ENCODE measurements at regions of chr10 and their contacts with region 1.

Region 1: GRCh38 chr10:119750391-119751230 is 24.8 kb downstream of the INPP5F start:
- DNase-seq: peak; percentile 36
- ATAC-seq: peak; percentile 95
- H3K4me3 ChIP-seq: no peak overlapping the region
- H3K27ac ChIP-seq: no peak overlapping the region
- H3K4me1 ChIP-seq: no peaks in the 10 kb centered on the region
- H3K27me3 ChIP-seq: no peaks in the 10 kb centered on the region
- CTCF ChIP-seq: peak; percentile 93
- EP300 ChIP-seq: no peak; a peak in 1 of 4 replicates
- POLR2A ChIP-seq: no peak
- RAD21 ChIP-seq: peak; percentile 99

Region 2: GRCh38 chr10:119715628-119716505 is 34.7 kb before region 1 on chr10:
- CTCF ChIA-PET with region 1: interaction called, 10 read pairs
- POLR2A ChIA-PET with region 1: no interaction called
- RAD21 ChIA-PET with region 1: interaction called, 4 read pairs
- SMC1A ChIA-PET with region 1: interaction called, 3 read pairs
- in situ Hi-C with region 1: no loop called
- intact Hi-C with region 1: no loop called
- DNase-seq: no peak
- ATAC-seq: no peak
- H3K4me3 ChIP-seq: no peak overlapping the region
- H3K27ac ChIP-seq: no peak overlapping the region
- H3K4me1 ChIP-seq: no peaks in the 10 kb centered on the region
- H3K27me3 ChIP-seq: no peaks in the 10 kb centered on the region
- CTCF ChIP-seq: no peak
- EP300 ChIP-seq: no peak
- POLR2A ChIP-seq: no peak
- RAD21 ChIP-seq: no peak

Region 3: DNA sequence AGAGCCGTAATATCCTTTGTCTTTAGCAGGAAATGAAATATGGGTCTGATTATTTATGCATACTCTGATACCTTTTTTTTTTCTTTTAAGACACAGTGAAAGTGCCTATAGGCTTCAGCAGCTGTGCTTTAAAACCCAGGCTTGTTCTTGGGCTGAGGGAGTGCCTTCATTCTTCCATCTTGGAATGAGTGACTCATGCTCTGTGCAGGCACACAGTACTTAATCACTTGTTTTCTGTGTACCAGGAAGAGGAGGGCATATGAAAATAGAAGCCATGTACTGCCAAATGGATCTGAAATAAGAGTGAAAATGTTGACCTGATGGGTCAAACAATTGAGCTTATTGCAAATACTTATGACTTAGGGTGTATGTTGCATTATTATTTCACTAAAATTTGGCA is 12.8 kb before region 1 on chr10:
- CTCF ChIA-PET with region 1: interaction called, 47 read pairs
- POLR2A ChIA-PET with region 1: interaction called, 3 read pairs
- RAD21 ChIA-PET with region 1: interaction called, 10 read pairs
- SMC1A ChIA-PET with region 1: interaction called, 23 read pairs
- in situ Hi-C with region 1: no loop called
- intact Hi-C with region 1: no loop called
- DNase-seq: no peak
- ATAC-seq: peak; percentile 39
- H3K4me3 ChIP-seq: no peak overlapping the region
- H3K27ac ChIP-seq: no peak overlapping the region
- H3K4me1 ChIP-seq: no peaks in the 10 kb centered on the region
- H3K27me3 ChIP-seq: no peaks in the 10 kb centered on the region
- CTCF ChIP-seq: no peak
- EP300 ChIP-seq: no peak
- POLR2A ChIP-seq: no peak
- RAD21 ChIP-seq: no peak

Region 4: DNA sequence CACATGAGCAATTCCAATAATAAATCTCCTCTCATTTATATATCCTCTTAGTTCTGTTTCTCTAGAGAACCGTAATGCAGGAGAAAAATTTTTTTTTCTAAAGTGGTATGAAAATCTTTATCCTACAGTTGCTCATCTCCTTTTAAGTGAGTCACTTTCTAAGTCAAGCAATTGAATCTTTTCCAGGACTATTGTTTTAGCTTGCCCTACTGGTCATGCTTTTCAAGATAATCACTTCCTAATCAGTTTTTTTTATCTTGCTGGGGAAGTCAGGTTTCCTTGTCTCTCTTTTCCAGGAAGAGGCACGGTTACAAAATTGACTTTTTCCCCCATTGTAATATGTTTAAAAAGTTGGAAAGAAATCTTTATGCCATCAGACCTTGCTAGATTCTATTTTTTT is 19.3 kb after region 1 on chr10:
- CTCF ChIA-PET with region 1: interaction called, 18 read pairs
- POLR2A ChIA-PET with region 1: interaction called, 4 read pairs
- RAD21 ChIA-PET with region 1: interaction called, 4 read pairs
- SMC1A ChIA-PET with region 1: interaction called, 27 read pairs
- in situ Hi-C with region 1: no loop called
- intact Hi-C with region 1: no loop called
- DNase-seq: no peak
- ATAC-seq: no peak
- H3K4me3 ChIP-seq: no peak overlapping the region
- H3K27ac ChIP-seq: no peak overlapping the region
- H3K4me1 ChIP-seq: no peaks in the 10 kb centered on the region
- H3K27me3 ChIP-seq: no peaks in the 10 kb centered on the region
- CTCF ChIP-seq: no peak
- EP300 ChIP-seq: no peak
- POLR2A ChIP-seq: no peak
- RAD21 ChIP-seq: no peak

Region 5: DNA sequence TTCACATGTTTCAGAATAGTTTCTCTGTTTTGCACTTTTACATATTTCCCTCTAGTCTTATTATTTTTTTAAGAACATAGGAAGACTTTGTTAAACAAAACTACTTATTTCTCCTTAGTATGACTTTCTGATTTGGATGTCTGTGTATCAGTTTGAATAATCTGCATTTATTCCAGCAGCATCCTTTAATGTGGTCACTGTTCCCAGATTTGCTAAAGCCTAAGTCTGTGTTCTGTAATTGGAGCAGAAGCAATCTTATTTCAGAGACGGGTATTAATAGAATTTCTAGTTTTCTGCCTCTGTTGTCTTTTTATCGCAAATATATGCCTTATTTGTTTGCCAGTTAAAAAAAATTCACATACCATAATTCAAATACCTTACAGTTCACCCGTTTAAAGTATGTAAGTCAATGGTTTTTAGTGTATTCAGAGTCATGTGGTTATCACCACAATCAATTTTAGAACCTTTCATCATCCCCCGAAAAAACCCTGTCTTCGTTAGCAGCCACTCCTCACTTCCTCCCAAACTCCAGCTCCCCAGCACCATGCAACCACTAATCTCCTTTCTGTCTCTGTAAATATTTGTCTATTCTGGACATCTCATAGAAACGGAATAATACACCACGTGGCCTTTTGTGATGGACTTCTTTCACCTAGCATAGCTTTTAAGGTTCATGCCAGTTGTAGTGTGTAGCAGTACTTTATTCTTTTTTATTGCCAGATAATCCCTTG is 33.9 kb after region 1 on chr10:
- CTCF ChIA-PET with region 1: interaction called, 20 read pairs
- POLR2A ChIA-PET with region 1: interaction called, 3 read pairs
- RAD21 ChIA-PET with region 1: interaction called, 10 read pairs
- SMC1A ChIA-PET with region 1: interaction called, 20 read pairs
- in situ Hi-C with region 1: no loop called
- intact Hi-C with region 1: no loop called
- DNase-seq: peak; percentile 54
- ATAC-seq: peak; percentile 91
- H3K4me3 ChIP-seq: no peak overlapping the region
- H3K27ac ChIP-seq: peak overlapping the region; percentile 7; the same call in 1 of the 2 replicates
- H3K4me1 ChIP-seq: peaks cover 14% of the 10 kb centered on the region
- H3K27me3 ChIP-seq: no peaks in the 10 kb centered on the region
- CTCF ChIP-seq: no peak
- EP300 ChIP-seq: peak; percentile 71 to 84; a peak in 3 of 4 replicates
- POLR2A ChIP-seq: no peak
- RAD21 ChIP-seq: no peak

Region 6: DNA sequence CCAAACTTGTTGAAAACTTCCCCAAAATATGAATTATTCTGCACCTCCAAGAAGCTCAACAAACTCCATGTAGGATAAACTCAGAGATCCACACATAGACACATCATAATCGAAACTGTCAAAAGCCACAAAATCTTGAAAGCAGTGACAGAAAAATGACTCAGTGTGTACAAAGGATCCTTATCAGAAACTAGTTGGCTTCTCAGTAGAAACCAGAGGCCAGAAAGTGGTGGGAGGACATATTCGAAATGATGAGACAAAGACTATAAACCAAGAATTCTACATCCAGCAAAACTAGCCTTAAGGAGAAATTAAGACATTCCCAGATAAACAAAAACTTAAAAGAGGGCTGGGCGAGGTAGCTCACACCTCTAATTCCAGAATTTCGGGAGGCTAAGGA is 83.6 kb after region 1 on chr10:
- CTCF ChIA-PET with region 1: interaction called, 17 read pairs
- POLR2A ChIA-PET with region 1: interaction called, 3 read pairs
- RAD21 ChIA-PET with region 1: interaction called, 12 read pairs
- SMC1A ChIA-PET with region 1: interaction called, 21 read pairs
- in situ Hi-C with region 1: no loop called
- intact Hi-C with region 1: no loop called
- DNase-seq: no peak
- ATAC-seq: peak; percentile 67
- H3K4me3 ChIP-seq: no peak overlapping the region
- H3K27ac ChIP-seq: no peak overlapping the region
- H3K4me1 ChIP-seq: no peaks in the 10 kb centered on the region
- H3K27me3 ChIP-seq: no peaks in the 10 kb centered on the region
- CTCF ChIP-seq: no peak
- EP300 ChIP-seq: no peak
- POLR2A ChIP-seq: no peak
- RAD21 ChIP-seq: no peak

Region 7: GRCh38 chr10:119872860-119873681 is 122.5 kb after region 1 on chr10:
- CTCF ChIA-PET with region 1: interaction called, 21 read pairs
- POLR2A ChIA-PET with region 1: interaction called, 8 read pairs
- RAD21 ChIA-PET with region 1: interaction called, 3 read pairs
- SMC1A ChIA-PET with region 1: interaction called, 10 read pairs
- in situ Hi-C with region 1: no loop called
- intact Hi-C with region 1: no loop called
- DNase-seq: peak; percentile 49
- ATAC-seq: peak; percentile 93
- H3K4me3 ChIP-seq: peak overlapping the region; percentile 85
- H3K27ac ChIP-seq: peak overlapping the region; percentile 83
- H3K4me1 ChIP-seq: peaks cover 9% of the 10 kb centered on the region
- H3K27me3 ChIP-seq: no peaks in the 10 kb centered on the region
- CTCF ChIP-seq: 0 out of 6 replicates have a peak, but pooled peaks of 1 of the 3 experiments have one; percentile 4
- EP300 ChIP-seq: no peak
- POLR2A ChIP-seq: peak; percentile 70
- RAD21 ChIP-seq: no peak

Measured in GM12878 (cell line).